Activated CD4-positive, alpha-beta T cell treated with anti-CD3 and anti-CD28 coated beads, Interleukin-2, amount 10 ng/mL, durations not matched to agents 7 days and 5 days (primary cell): ENCODE measurements at regions of chr1 and their contacts with region 1.

Region 1: DNA sequence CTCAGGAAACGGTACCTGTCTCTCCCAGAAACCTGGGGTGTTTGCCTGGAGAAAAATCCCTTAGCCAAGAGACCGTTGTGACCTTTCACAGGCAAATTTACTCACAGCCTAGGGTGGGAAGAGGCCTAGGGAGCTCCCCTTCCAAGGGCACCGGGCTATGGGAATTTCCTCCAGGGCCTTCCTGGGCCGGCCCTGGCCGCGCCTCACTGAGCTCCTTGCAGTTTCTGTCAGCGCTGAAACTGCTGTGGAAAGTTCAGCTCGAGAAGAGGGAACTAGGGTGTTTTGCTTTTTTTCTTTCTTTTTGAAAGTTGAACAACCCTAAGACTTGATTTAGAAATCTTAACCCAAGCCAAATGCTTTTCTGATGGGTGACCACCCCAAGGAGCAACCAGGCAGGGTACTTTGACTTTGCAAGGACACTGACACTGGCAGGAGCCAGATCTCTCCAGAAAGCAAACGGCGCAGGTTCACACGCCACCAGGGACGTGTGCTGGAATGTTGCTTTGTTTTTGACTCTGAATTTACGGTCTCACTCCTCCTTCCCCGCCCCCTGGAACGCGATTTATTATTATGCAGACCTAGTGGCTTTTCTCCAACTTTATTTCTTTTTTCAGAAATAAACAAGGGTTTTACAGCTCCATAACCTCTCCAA is 229.6 kb upstream of the JUN start:
- DNase-seq: no peak
- H3K4me3 Mint-ChIP-seq: no peak overlapping the region
- H3K27ac Mint-ChIP-seq: peak overlapping the region; percentile 14
- H3K4me1 Mint-ChIP-seq: peaks cover 19% of the 10 kb centered on the region
- H3K27me3 Mint-ChIP-seq: peaks cover 5% of the 10 kb centered on the region

Region 2: DNA sequence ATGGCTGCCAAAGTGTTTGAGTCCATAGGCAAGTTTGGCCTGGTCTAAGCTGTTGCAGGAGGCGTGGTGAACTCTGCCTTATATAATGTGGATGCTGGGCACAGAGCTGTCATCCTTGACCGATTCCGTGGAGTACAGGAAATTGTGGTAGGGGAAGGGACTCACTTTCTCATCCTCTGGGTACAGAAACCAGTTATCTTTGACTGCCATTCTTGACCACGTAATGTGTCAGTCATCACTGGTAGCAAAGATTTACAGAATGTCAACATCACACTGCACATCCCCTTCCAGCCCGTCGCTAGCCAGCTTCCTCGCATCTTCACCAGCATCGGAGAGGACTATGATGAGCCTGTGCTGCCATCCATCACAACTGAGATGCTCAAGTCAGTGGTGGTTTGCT is 13.7 kb before region 1 on chr1:
- CTCF ChIA-PET with region 1: interaction called, 15 read pairs
- POLR2A ChIA-PET with region 1: no interaction called
- DNase-seq: no peak
- H3K4me3 Mint-ChIP-seq: no peak overlapping the region
- H3K27ac Mint-ChIP-seq: no peak overlapping the region
- H3K4me1 Mint-ChIP-seq: peaks cover 23% of the 10 kb centered on the region
- H3K27me3 Mint-ChIP-seq: no peaks in the 10 kb centered on the region